ENCODE measurements at regions of chr17 and their contacts with region 1.

Region 1: DNA sequence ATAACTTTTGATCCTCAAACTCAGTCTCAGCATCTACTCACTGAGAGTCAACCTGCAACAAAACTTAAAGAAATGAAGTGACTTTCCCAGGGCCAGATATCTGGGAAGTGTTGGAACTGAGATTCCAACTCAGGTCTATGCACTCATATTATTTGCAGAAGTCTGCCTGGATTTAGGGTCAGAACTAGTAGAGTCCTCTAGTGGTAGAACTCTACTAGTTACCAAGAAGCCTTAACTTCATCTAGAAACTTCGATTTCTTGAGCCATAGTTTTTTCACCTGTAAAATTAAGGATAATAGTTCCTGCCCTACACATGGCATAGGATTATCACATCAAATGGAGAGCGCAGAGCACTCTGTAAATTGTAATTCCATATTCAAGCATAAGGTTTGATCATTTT is 23.4 kb upstream of the KRT24 start:
- DNase-seq: peak; percentile 45
- H3K4me3 Mint-ChIP-seq: no peak overlapping the region
- H3K27ac Mint-ChIP-seq: no peak overlapping the region
- H3K4me1 Mint-ChIP-seq: peaks cover 19% of the 10 kb centered on the region
- H3K27me3 Mint-ChIP-seq: peaks cover 54% of the 10 kb centered on the region
- CTCF ChIP-seq: no peak

Region 2: DNA sequence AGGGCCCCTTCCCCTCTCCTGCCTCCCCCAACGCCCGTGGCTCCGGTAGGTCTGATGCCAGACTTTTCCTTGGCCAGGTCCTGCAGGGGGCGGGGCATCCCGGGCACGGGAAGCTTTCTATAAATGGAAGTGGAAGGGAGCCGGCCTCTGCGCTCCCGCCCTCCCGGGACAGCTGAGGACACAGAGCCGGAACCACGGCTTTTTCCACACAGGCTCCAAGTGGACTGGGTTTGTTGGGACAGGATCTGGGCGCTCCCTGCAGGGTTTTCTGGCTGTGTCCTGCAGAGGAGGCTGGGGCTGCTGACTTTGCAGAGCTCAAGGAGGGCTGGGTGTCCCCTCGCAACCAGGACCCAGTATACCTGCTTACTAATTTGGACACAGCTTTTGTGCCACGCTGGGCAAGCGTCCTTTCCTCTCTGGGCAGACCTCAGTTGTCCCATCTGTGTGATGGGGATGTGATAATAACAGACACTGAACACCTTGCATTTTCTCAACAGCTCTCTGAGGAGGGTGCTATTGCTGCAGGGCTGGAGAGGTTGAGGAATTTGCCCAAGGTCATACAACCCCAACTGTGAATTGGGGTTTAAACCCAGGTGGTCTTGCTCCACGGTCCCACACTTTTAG is 227.3 kb before region 1 on chr17:
- CTCF ChIA-PET with region 1: no interaction called
- intact Hi-C with region 1: no loop called
- DNase-seq: peak; percentile 100
- H3K4me3 Mint-ChIP-seq: peak overlapping the region; percentile 33
- H3K27ac Mint-ChIP-seq: no peak overlapping the region
- H3K4me1 Mint-ChIP-seq: peaks cover 20% of the 10 kb centered on the region
- H3K27me3 Mint-ChIP-seq: peaks cover 82% of the 10 kb centered on the region
- CTCF ChIP-seq: no peak

Region 3: DNA sequence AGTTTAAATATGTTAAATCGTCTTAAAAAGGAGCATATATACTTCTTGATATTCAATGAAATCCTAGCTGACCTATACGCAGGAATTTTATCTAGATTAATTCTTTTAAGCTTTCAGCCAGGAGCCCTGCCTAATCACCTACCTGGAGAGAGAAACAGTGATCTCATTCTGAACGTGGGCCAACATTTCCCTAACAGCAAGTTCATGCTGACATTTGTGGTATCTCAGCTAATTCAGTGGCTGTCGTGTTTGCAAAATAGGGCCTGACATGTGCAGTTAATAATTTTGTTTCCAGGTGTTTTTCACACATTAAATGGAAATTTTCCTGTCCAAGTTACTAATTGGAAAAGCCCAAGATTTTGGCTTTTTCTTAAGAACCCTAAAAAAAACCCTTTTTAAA is 40.7 kb before region 1 on chr17:
- CTCF ChIA-PET with region 1: interaction called, 37 read pairs
- intact Hi-C with region 1: loop called (anchors 1 kb)
- DNase-seq: no peak
- H3K4me3 Mint-ChIP-seq: no peak overlapping the region
- H3K27ac Mint-ChIP-seq: no peak overlapping the region
- H3K4me1 Mint-ChIP-seq: no peaks in the 10 kb centered on the region
- H3K27me3 Mint-ChIP-seq: peaks cover 38% of the 10 kb centered on the region
- CTCF ChIP-seq: no peak

Region 4: DNA sequence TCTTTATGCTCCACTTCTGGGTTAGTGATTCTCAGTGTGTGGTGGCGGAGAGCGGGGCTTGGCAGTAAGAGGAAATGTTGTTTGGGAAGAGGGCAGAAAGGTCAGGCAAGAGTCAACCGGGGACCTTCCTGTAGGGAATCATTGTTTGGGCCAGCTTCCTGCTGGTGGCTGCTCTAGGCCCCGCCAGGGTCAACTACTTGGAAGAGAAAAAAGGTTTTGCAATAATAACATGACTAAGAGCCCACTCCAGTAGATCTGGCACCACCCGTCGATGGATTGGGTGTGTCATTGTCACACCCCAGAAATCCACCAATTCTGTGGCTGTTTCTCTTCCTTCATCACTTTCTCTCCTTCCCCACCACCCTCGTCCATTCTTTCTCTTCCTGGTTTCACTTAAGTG is 19.2 kb before region 1 on chr17:
- CTCF ChIA-PET with region 1: interaction called, 16 read pairs
- intact Hi-C with region 1: no loop called
- DNase-seq: peak; percentile 92
- H3K4me3 Mint-ChIP-seq: no peak overlapping the region
- H3K27ac Mint-ChIP-seq: peak overlapping the region; percentile 14
- H3K4me1 Mint-ChIP-seq: peaks cover 36% of the 10 kb centered on the region
- H3K27me3 Mint-ChIP-seq: peaks cover 14% of the 10 kb centered on the region
- CTCF ChIP-seq: no peak

Region 5: DNA sequence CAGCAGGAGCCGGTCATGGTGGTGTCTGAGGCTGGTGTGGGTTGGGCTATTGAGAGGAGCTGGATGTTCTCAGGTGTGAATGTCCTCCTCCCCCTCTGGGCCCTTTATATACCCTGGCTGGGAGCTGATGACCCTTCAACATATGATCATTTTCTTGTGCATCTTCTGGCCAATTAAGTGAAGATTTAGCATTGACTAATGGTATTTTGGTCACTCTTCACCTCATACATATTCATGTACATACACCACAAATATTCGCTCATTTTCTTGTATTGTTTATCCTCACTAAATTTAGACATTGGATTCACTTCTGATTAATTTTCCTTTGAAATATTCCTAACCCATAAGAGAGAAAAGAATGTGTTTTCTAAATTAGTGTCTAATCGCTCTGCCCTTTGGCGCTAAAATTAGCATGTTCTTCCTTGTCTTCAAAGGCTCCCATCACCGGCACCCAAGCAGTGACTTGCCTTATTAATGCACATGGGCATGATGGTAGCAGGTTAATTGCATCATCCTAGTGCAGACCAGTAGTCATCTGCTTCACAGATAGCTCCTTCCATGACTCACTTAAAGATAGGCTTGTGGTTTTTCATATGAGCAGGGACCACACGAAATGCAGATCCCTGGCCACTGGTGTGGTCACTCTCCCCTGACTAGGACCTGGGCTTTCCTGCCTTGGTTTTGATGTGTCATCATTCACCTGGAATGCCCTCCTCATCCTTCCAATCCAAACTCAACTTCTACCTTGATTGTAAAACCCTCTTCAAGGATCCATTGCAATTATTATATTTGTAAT is 339.1 kb after region 1 on chr17 and contains the start of gene KRTAP2-4:
- CTCF ChIA-PET with region 1: no interaction called
- intact Hi-C with region 1: no loop called
- DNase-seq: no peak
- H3K4me3 Mint-ChIP-seq: no peak within 1 kb of the TSS
- H3K27ac Mint-ChIP-seq: peak within 1 kb of the TSS; percentile 25
- H3K4me1 Mint-ChIP-seq: peaks cover 39% of the 10 kb centered on the region
- H3K27me3 Mint-ChIP-seq: no peaks in the 10 kb centered on the region
- CTCF ChIP-seq: no peak
- total RNA-seq, gene KRTAP2-4: not detected in 2 replicates

Region 6: DNA sequence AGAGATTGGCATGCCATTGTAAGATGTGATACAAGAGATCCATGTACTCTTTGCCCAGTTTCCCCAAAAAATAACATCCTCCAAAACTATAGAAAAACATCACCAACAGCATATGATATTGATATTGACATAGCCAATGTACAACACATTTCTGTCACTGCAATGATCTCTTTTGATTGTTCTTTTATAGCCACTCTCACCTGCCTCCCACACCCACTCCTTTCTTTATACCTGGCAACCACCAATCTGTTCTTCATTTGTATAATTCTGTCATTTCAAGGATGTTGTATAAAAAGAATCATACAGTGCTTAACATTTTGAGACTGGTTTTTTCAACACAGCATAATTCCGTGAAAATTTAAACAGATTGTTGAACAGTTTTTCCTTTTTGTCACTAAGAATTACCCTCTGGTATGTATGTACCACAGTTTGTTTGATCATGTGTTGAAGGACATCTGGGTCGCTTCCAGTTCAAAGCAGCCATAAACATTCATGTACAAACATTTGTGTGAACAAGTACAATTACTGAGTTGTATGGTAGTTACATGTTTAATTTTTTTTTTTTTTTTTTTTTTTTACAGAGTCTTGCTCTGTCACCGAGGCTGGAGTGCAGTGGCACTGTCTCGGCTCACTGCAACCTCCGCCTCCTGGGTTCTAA is 472.6 kb after region 1 on chr17:
- CTCF ChIA-PET with region 1: no interaction called
- intact Hi-C with region 1: no loop called
- DNase-seq: no peak
- H3K4me3 Mint-ChIP-seq: no peak overlapping the region
- H3K27ac Mint-ChIP-seq: no peak overlapping the region
- H3K4me1 Mint-ChIP-seq: no peaks in the 10 kb centered on the region
- H3K27me3 Mint-ChIP-seq: no peaks in the 10 kb centered on the region
- CTCF ChIP-seq: no peak

Measured in Calu3 (cell line).